Ovary (tissue), 10 donors: ENCODE measurements at regions of chr21 and their contacts with region 1.

Region 1: DNA sequence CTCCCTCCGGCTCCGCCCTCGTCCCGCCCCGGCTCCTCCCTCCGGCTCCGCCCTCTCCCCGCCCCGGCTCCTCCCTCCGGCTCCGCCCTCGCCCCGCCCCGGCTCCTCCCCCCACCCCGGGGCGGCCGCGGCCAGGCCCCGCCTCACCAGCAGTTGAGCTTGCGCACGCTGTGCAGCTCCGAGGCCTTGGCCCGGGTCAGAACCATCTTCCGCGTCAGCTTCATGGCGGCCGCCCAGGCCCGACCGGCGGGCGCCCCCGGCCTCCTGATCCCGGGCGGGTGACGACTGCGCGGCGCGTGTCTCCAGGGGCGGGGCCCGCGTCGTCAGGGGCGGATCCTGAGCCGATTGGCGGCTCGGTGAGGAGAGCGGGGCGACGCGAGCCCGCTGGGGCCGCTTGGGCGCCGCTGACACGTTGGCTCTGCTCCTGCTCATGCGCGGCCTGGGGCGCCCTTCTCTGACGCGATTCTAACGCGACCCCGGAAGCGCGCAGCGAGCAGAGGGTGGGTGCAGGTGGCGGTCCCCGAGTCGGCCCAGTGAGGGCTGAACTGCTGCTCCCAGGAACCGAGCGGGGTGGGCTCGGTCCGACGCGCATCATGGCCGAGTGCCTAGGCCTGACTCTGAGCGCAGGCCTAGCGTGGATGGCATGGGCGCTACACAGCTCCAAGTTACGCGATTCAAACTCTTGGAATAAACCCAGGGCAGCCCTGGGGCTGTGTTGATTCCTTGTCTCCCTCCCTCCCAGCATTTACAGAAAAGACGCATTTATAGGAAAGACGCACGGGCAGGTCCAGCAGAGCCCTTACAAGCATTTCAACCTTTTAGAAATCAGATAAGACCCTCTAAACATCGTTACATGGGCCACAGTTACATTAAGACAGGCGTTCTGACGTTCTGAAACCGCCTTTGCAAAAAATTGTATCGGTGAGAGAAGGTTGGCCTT is at the start of gene CFAP410:
- DNase-seq: peak; percentile 94 to 97 (median 96)
- H3K4me3 ChIP-seq: peak within 1 kb of the TSS; percentile 75
- H3K27ac ChIP-seq: peak within 1 kb of the TSS; percentile 95 to 98
- H3K4me1 ChIP-seq: peaks cover 4% of the 10 kb centered on the region
- H3K27me3 ChIP-seq: no peaks in the 10 kb centered on the region
- CTCF ChIP-seq: no peak
- EP300 ChIP-seq: no peak
- POLR2A ChIP-seq: peak; percentile 92
- total RNA-seq, gene CFAP410: 23.1 to 40.8 (median 29.3) TPM

Region 2: DNA sequence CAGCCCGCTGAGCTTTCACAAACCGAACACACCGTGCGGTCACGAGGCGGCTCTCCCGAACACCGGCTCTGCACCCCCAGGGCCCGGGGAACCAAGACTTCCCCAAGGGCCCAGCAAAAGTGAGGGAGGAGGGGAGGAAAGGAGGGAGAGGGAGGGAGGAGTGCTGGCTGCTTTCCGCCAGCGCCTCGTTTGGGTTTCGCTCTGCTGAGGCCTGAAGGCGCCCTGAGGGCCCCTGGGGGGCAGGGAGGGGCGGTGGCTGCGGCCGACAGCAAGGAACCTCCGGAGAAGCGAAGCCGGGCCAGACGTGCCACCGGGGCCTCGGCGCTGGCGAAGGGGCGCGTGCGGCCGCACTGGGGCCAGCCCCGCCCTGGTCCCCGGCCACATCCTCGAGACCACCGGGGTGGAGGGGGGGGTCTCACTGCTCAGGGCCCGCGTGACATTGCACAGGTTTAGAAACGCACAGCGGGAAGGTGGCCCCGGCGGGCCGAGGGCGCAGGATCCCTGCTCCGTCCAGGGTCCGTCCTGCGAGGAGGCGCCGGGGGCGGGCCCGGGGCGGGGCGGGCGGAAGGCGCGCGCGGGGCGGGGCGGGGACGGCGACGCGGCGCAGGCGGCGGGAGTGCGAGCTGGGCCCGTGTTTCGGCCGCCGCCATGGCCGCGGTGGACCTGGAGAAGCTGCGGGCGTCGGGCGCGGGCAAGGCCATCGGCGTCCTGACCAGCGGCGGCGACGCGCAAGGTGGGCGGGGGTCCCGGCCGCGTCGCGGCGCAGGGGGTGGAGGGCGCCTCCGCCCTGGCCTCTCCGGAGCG is 39.6 kb before region 1 on chr21 and contains the start of gene PFKL:
- intact Hi-C with region 1: loop called in 1 of 4 experiments (anchors 5 kb)
- DNase-seq: peak; percentile 60 to 82 (median 73)
- H3K4me3 ChIP-seq: peak within 1 kb of the TSS; percentile 98
- H3K27ac ChIP-seq: peak within 1 kb of the TSS; percentile 78 to 88
- H3K4me1 ChIP-seq: peaks cover 16% of the 10 kb centered on the region
- H3K27me3 ChIP-seq: no peaks in the 10 kb centered on the region
- CTCF ChIP-seq: no peak
- EP300 ChIP-seq: no peak
- POLR2A ChIP-seq: peak; percentile 4
- total RNA-seq, gene PFKL: 38.7 to 104 (median 88.7) TPM

Region 3: DNA sequence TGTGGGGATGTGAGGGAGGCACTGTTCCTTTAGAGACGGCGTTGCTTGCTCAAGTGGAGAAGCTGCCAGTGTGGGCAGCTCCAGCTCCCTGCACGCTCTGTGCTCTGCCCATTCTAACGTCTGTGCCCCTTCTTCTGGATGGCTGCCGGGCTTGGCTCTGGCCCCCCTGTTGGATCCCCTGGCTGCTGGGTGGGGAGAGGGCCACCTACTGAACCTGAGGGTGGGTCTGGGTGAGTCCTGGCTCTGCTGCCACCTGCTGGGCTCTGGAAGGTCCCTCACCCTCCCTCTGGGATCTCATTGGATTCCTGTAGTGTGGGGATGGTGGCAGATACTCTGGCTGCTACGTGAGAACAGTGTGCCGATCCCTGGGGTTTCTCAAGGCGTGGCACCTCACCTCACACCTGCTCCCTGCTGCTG is 34.4 kb before region 1 on chr21:
- intact Hi-C with region 1: loop called in 1 of 4 experiments (anchors 2 kb)
- DNase-seq: peak in 4 of 5 donors; percentile 40 to 72 (median 58)
- H3K4me3 ChIP-seq: no peak overlapping the region
- H3K27ac ChIP-seq: no peak overlapping the region
- H3K4me1 ChIP-seq: peaks cover 16% of the 10 kb centered on the region
- H3K27me3 ChIP-seq: no peaks in the 10 kb centered on the region
- CTCF ChIP-seq: peak in 2 of 3 donors; percentile 32 to 43
- EP300 ChIP-seq: no peak
- POLR2A ChIP-seq: no peak

Region 4: GRCh38 chr21:44537930-44538911 is 199.0 kb after region 1 on chr21:
- intact Hi-C with region 1: no loop called
- DNase-seq: peak in 1 of 5 donors; percentile 3
- H3K4me3 ChIP-seq: no peak overlapping the region
- H3K27ac ChIP-seq: no peak overlapping the region
- H3K4me1 ChIP-seq: no peaks in the 10 kb centered on the region
- H3K27me3 ChIP-seq: no peaks in the 10 kb centered on the region
- CTCF ChIP-seq: no peak
- EP300 ChIP-seq: no peak
- POLR2A ChIP-seq: no peak

Region 5: GRCh38 chr21:44801468-44802395 is 462.5 kb after region 1 on chr21 and contains the start of gene UBE2G2:
- intact Hi-C with region 1: loop called in 1 of 4 experiments (anchors 10 kb)
- DNase-seq: peak; percentile 71 to 91 (median 83)
- H3K4me3 ChIP-seq: peak within 1 kb of the TSS; percentile 76
- H3K27ac ChIP-seq: peak within 1 kb of the TSS in 1 of 2 donors; percentile 2
- H3K4me1 ChIP-seq: peaks cover 3% of the 10 kb centered on the region
- H3K27me3 ChIP-seq: no peaks in the 10 kb centered on the region
- CTCF ChIP-seq: no peak
- EP300 ChIP-seq: no peak
- POLR2A ChIP-seq: peak; percentile 57
- total RNA-seq, gene UBE2G2: 47.0 to 84.9 (median 71.7) TPM

Region 6: GRCh38 chr21:45266518-45267389 is 927.5 kb after region 1 on chr21:
- intact Hi-C with region 1: loop called in 1 of 4 experiments (anchors 10 kb)
- DNase-seq: peak in 3 of 5 donors; percentile 13 to 20 (median 14)
- H3K4me3 ChIP-seq: no peak overlapping the region
- H3K27ac ChIP-seq: no peak overlapping the region
- H3K4me1 ChIP-seq: no peaks in the 10 kb centered on the region
- H3K27me3 ChIP-seq: no peaks in the 10 kb centered on the region
- CTCF ChIP-seq: no peak
- EP300 ChIP-seq: no peak
- POLR2A ChIP-seq: no peak